CD4-positive, alpha-beta memory T cell (primary cell): ENCODE measurements at regions of chr6 and their contacts with region 1.

Region 1: GRCh38 chr6:89940225-89941027 is 46.2 kb downstream of the GJA10 start:
- DNase-seq: peak; percentile 70 to 78 (median 71)
- H3K4me3 ChIP-seq: no peak overlapping the region
- H3K4me3 Mint-ChIP-seq: no peak overlapping the region
- H3K27ac ChIP-seq: no peak overlapping the region
- H3K27ac Mint-ChIP-seq: peak overlapping the region in 6 of 7 donors; percentile 5 to 67 (median 40)
- H3K4me1 ChIP-seq: peaks cover 7% of the 10 kb centered on the region
- H3K4me1 Mint-ChIP-seq: peaks cover 10 to 30% (median 17%) of the 10 kb centered on the region in 4 donors
- H3K27me3 ChIP-seq: no peaks in the 10 kb centered on the region
- H3K27me3 Mint-ChIP-seq: no peaks in the 10 kb centered on the region

Region 2: DNA sequence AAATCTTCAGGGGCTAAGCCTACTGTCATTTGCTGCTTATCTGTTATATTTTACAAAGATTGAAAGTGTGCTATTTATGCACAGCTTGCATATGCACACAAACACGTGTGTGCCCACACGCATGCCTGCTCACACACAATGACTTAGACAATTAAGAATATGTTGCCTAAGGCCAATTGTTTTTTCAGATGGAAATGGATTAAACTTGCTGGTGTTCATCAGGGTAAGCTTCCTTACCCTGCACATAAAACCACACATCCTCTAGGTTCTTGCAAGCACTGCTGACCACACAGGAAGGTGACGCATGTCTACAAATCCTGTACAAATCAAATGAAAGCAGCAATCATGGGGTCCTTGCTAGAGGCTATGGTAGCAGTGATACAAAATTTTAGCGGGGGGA is 12.3 kb after region 1 on chr6:
- CTCF ChIA-PET with region 1: interaction called, 34 read pairs
- POLR2A ChIA-PET with region 1: interaction called, 8 read pairs
- intact Hi-C with region 1: no loop called
- DNase-seq: peak; percentile 80 to 90 (median 83)
- H3K4me3 ChIP-seq: no peak overlapping the region
- H3K4me3 Mint-ChIP-seq: peak overlapping the region in 7 of 8 donors; percentile 37 to 83 (median 68)
- H3K27ac ChIP-seq: peak overlapping the region; percentile 7
- H3K27ac Mint-ChIP-seq: peak overlapping the region; percentile 84 to 92 (median 89)
- H3K4me1 ChIP-seq: peaks cover 53% of the 10 kb centered on the region
- H3K4me1 Mint-ChIP-seq: peaks cover 46 to 71% (median 59%) of the 10 kb centered on the region in 4 donors
- H3K27me3 ChIP-seq: no peaks in the 10 kb centered on the region
- H3K27me3 Mint-ChIP-seq: no peaks in the 10 kb centered on the region

Region 3: GRCh38 chr6:89984926-89985750 is 44.7 kb after region 1 on chr6:
- CTCF ChIA-PET with region 1: interaction called, 10 read pairs
- POLR2A ChIA-PET with region 1: no interaction called
- intact Hi-C with region 1: no loop called
- DNase-seq: no peak
- H3K4me3 ChIP-seq: no peak overlapping the region
- H3K4me3 Mint-ChIP-seq: no peak overlapping the region
- H3K27ac ChIP-seq: no peak overlapping the region
- H3K27ac Mint-ChIP-seq: peak overlapping the region in 4 of 7 donors; percentile 8 to 84 (median 54)
- H3K4me1 ChIP-seq: no peaks in the 10 kb centered on the region
- H3K4me1 Mint-ChIP-seq: peaks cover 13 to 50% (median 37%) of the 10 kb centered on the region in 4 donors
- H3K27me3 ChIP-seq: no peaks in the 10 kb centered on the region
- H3K27me3 Mint-ChIP-seq: no peaks in the 10 kb centered on the region

Region 4: GRCh38 chr6:90156861-90157260 is 216.4 kb after region 1 on chr6:
- CTCF ChIA-PET with region 1: interaction called, 11 read pairs
- POLR2A ChIA-PET with region 1: interaction called, 3 read pairs
- intact Hi-C with region 1: no loop called
- DNase-seq: peak; percentile 46 to 54 (median 49)
- H3K4me3 ChIP-seq: no peak overlapping the region
- H3K4me3 Mint-ChIP-seq: peak overlapping the region; percentile 3 to 73 (median 60)
- H3K27ac ChIP-seq: no peak overlapping the region
- H3K27ac Mint-ChIP-seq: peak overlapping the region; percentile 40 to 92 (median 84)
- H3K4me1 ChIP-seq: peaks cover 43% of the 10 kb centered on the region
- H3K4me1 Mint-ChIP-seq: peaks cover 22 to 64% (median 49%) of the 10 kb centered on the region in 4 donors
- H3K27me3 ChIP-seq: no peaks in the 10 kb centered on the region
- H3K27me3 Mint-ChIP-seq: no peaks in the 10 kb centered on the region

Region 5: DNA sequence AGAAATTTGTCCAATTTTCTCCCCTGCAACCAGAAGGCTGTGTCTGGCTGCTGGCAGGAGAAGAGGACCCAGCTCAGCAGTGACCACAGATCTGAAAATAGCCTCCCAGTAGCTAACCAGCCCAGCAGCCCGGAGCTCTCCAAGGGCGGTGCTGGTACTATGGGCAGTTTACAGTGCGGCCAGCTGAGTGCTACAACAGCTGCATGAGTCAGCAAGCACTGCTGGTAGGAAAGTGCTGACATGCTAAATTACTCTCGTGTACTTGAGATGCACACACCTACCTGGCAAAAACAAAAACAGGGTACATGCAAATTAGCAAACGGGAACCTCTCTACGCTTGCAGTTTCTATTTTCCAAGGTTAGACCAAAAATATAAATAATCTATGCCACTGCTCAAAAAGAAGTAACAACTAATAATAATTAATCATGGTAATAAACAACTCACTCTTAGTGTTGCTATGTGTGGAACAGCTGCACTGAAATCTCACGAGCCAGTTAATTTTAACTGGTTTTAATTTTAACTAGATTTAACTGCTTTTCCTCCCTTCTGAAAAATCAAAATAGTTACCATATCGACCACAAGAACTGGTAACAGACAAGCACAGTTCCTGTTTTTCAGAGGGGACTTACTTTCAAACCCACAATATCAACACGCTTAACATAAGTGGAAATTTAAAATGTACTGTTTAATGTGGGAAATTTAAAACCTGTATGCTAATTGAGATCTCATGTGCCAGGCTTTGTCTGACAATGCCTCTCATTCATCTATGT is 345.4 kb after region 1 on chr6:
- CTCF ChIA-PET with region 1: interaction called, 27 read pairs
- POLR2A ChIA-PET with region 1: no interaction called
- intact Hi-C with region 1: loop called (anchors 1 kb)
- DNase-seq: peak; percentile 68 to 83 (median 76)
- H3K4me3 ChIP-seq: peak overlapping the region; percentile 1 to 58
- H3K4me3 Mint-ChIP-seq: peak overlapping the region; percentile 80 to 95 (median 86)
- H3K27ac ChIP-seq: peak overlapping the region; percentile 46
- H3K27ac Mint-ChIP-seq: peak overlapping the region; percentile 77 to 98 (median 89)
- H3K4me1 ChIP-seq: peaks cover 32% of the 10 kb centered on the region
- H3K4me1 Mint-ChIP-seq: peaks cover 47 to 89% (median 68%) of the 10 kb centered on the region in 4 donors
- H3K27me3 ChIP-seq: no peaks in the 10 kb centered on the region
- H3K27me3 Mint-ChIP-seq: peaks cover 0 to 2% of the 10 kb centered on the region in 2 donors

Region 6: DNA sequence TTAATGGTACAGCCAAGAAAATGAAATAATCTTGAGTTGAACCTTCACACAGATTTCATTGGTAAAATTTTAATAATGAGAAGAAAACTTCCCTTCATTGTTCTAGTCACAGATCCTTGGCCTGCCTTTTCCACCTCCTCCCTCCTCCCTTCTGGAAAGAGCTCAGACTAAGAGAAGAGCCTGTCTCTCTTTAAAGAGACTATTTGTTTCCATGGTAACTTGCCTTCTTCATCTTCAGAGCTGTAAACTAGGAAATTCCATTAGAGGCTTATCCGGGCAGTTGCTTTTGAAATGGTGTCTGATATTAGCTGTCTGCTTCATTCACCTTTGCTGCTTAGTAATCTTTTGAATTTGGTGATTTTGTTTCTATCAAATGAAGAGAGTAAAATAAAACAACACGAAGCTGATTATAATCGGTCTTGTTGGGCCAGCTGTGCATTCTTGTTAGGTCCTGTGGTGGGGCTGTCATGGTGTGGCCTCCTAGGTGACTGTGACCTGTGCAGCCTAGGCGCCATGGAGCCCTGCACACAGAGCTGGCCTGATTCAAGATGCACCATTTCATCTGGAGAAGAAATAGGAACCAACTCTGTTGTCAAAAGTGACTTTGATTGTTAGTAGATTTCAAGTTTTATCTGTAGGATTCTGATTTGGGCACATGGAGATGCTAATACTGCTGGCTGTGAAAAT is 549.7 kb after region 1 on chr6:
- CTCF ChIA-PET with region 1: interaction called, 12 read pairs
- POLR2A ChIA-PET with region 1: no interaction called
- intact Hi-C with region 1: no loop called
- DNase-seq: no peak
- H3K4me3 ChIP-seq: no peak overlapping the region
- H3K4me3 Mint-ChIP-seq: no peak overlapping the region
- H3K27ac ChIP-seq: no peak overlapping the region
- H3K27ac Mint-ChIP-seq: no peak overlapping the region
- H3K4me1 ChIP-seq: no peaks in the 10 kb centered on the region
- H3K4me1 Mint-ChIP-seq: peaks cover 0 to 4% (median 0%) of the 10 kb centered on the region in 4 donors
- H3K27me3 ChIP-seq: no peaks in the 10 kb centered on the region
- H3K27me3 Mint-ChIP-seq: peaks cover 21 to 24% of the 10 kb centered on the region in 2 donors